Ovary (tissue), 10 donors: ENCODE measurements at regions of chr3 and their contacts with region 1.

Region 1: DNA sequence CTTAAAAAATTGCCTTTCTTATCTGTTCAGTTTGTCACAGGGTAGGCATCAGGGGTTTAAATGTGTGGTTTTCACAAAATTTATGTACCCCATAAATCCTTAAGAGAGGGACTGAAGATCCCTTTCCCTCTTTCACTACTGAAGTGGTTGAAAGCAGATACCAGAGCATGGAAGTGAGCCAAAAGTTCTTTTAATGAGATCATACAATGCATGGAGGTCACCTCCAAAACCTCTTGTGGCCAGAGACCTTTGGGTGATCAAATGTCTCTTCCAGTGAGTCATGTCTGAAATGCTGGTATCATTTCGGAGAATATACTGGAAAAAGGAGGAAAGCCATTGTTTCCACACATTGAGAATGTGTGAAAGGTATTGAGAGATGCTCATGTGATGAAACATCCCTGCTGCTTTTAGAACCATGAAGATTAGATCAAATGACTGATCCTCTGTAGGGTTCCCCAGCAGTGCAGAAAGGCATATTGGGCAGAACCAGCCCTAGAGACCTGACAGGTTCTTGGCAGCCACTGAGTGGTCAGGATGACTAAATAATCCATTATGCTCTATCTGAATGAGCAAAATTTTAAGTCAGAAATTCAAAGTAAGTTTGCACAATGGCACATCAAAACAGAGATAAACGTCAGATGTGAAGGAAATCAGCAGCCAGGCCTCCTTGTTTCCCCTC is 165.8 kb upstream of the SLC2A2 start:
- DNase-seq: no peak
- H3K4me3 ChIP-seq: no peak overlapping the region
- H3K27ac ChIP-seq: no peak overlapping the region
- H3K4me1 ChIP-seq: no peaks in the 10 kb centered on the region
- H3K27me3 ChIP-seq: no peaks in the 10 kb centered on the region
- CTCF ChIP-seq: no peak
- EP300 ChIP-seq: no peak
- POLR2A ChIP-seq: no peak

Region 2: GRCh38 chr3:171459942-171460724 is 267.8 kb after region 1 on chr3 and contains the start of gene TNIK:
- intact Hi-C with region 1: loop called in 1 of 4 experiments (anchors 10 kb)
- DNase-seq: peak; percentile 73 to 82 (median 81)
- H3K4me3 ChIP-seq: peak within 1 kb of the TSS; percentile 80
- H3K27ac ChIP-seq: peak within 1 kb of the TSS; percentile 23 to 29
- H3K4me1 ChIP-seq: peaks cover 3% of the 10 kb centered on the region
- H3K27me3 ChIP-seq: no peaks in the 10 kb centered on the region
- CTCF ChIP-seq: peak in 2 of 3 donors; percentile 14 to 21
- EP300 ChIP-seq: no peak
- POLR2A ChIP-seq: no peak
- total RNA-seq, gene TNIK: 2.2 to 6.3 (median 4.5) TPM